ENCODE measurements at regions of chr14 and their contacts with region 1.

Region 1: DNA sequence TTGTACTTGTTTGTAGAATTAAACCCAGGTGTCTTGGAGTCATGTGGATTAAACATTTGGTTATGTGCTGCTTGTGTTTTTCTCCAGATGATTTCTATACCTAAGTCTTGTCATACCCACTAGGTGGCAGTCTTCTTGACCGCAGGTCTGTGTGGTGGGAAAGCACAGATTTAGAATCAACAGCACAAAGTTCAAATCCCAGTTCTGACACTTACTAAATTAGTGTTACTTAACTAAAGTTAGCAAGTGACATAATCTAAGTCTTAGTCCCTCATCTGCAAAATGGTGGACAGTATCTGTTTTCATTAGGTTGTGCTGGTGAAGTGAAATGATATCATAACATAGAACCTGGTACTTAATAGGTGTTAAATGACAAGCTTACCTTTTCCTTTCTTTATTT is 151.0 kb upstream of the ARHGAP5 start:
- DNase-seq: no peak
- ATAC-seq: no peak
- H3K4me3 ChIP-seq: no peak overlapping the region
- H3K27ac ChIP-seq: peak overlapping the region; percentile 70 to 92 (median 84)
- H3K4me1 ChIP-seq: peaks cover 5 to 49% (median 36%) of the 10 kb centered on the region in 9 donors
- H3K27me3 ChIP-seq: no peaks in the 10 kb centered on the region
- CTCF ChIP-seq: peak in 8 of 9 donors; percentile 32 to 63 (median 48)

Region 2: GRCh38 chr14:31561155-31561846 is 364.8 kb before region 1 on chr14 and contains the start of gene NUBPL:
- intact Hi-C with region 1: loop called in 1 of 10 experiments (anchors 5 kb)
- DNase-seq: peak; percentile 97 to 98
- ATAC-seq: peak; percentile 96 to 99 (median 98)
- H3K4me3 ChIP-seq: peak within 1 kb of the TSS; percentile 65 to 91 (median 79)
- H3K27ac ChIP-seq: peak within 1 kb of the TSS; percentile 15 to 95 (median 84)
- H3K4me1 ChIP-seq: peaks cover 0 to 29% (median 9%) of the 10 kb centered on the region in 9 donors
- H3K27me3 ChIP-seq: no peaks in the 10 kb centered on the region
- CTCF ChIP-seq: no peak
- total RNA-seq, gene NUBPL: 19.3 to 32.0 (median 24.7) TPM

Measured in heart right ventricle (tissue), 16 donors.